ENCODE measurements at regions of chr12 and their contacts with region 1.

Region 1: DNA sequence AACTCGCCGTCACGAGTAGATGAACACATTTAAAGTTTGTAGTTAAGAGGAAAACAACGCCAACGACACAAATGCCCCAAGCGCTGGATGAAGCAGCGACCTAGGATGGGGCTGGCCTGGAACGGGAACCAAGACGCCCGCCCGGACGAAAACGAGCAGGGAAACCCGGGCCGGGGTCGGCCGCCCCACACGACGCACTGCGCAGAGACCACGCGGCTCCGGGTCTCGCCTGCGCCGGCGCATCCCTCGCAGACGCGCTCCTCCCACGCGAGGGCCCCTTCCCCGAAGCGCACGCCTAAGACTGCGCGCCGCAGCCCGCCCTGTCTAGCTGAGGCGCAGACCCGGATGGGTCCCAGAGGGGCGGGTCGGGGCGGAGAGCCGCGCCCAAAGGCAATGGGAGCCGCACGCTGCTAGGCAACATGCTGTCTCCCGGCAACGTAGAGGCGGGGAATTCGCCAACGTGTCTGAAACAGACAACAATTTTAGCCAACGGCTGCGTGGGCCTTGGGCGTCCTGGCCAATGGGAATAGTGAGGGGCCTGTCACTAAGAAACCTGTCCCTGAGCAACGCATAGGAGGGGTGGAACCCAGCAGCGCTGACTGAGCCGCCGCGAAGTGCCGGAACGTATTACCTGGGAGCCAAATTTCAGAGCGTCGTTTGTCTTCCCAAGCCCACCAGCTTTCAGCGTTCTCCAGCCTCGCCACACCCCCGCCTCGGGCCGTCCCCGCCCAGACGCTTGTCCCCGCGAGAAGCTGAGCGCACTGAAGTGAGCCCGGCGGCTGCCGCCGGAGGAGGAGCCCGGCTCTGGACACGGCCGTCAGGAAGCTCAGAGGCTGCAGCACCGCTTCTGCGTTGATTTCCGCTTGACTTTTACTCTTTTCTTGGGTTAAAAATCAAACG is 21.0 kb upstream of the CHFR start:
- DNase-seq: peak; percentile 96
- ATAC-seq: peak; percentile 97

Region 2: DNA sequence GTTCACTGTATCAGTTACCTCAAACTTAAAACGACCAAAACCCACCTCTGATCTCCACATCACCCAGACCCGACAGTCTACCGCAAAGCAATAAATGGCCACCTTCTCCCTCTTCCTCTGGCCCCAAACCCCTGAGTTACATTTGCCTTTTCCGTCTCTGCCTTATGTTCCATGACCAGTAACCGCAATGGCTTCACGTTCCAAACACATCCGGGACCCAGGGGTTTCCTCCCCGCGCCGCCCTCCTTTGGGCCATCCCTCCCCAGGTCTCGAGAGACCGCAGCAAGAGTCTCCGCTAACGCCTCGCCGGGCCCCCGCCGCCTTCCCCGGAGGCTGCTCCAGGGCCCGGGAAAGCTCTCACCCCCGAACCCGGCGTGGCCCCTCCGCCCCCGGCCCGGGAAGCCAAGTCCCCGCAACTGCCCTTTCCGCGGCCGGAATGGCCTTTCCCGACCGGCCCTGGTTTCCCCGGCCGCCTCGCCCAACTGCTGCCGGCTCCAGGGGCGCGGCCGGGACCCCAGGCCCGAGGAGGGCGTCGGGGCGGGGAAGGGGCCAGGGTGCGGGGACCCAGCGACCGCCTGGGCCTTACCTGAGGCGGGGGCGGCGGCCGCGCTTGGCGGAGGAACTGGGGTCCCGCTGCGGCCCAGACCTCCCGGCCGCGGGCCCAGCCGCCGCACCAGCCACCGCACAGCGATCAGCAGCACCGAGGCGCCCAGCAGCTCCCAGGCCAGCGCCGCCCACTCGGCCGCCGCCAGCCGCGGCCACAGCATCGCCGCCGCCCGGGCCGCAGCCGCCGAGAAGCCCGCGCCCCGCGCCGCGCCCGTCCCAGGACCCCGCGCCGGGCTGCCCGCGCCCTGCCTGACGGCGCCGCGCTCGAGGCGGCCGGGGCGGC is 147.1 kb before region 1 on chr12 and contains the start of gene ANKLE2:
- intact Hi-C with region 1: loop called (anchors 5 kb)
- DNase-seq: peak; percentile 82
- ATAC-seq: peak; percentile 33
- total RNA-seq, gene ANKLE2: 24.9 TPM

Region 3: GRCh38 chr12:132956011-132956788 is 47.8 kb after region 1 on chr12 and contains the start of gene ZNF605:
- intact Hi-C with region 1: loop called (anchors 2 kb)
- DNase-seq: peak; percentile 95
- ATAC-seq: peak; percentile 96
- total RNA-seq, gene ZNF605: 13.1 TPM